Adrenal gland (tissue), 19 donors: ENCODE measurements at regions of chr1 and their contacts with region 1.

Region 1: GRCh38 chr1:17236779-17237560 is 11.9 kb upstream of the PADI3 start:
- DNase-seq: peak; percentile 86 to 97 (median 88)
- H3K4me3 ChIP-seq: no peak overlapping the region
- H3K27ac ChIP-seq: no peak overlapping the region
- H3K4me1 ChIP-seq: no peaks in the 10 kb centered on the region
- H3K27me3 ChIP-seq: no peaks in the 10 kb centered on the region
- CTCF ChIP-seq: peak; percentile 90 to 95 (median 94)
- POLR2A ChIP-seq: no peak

Region 2: DNA sequence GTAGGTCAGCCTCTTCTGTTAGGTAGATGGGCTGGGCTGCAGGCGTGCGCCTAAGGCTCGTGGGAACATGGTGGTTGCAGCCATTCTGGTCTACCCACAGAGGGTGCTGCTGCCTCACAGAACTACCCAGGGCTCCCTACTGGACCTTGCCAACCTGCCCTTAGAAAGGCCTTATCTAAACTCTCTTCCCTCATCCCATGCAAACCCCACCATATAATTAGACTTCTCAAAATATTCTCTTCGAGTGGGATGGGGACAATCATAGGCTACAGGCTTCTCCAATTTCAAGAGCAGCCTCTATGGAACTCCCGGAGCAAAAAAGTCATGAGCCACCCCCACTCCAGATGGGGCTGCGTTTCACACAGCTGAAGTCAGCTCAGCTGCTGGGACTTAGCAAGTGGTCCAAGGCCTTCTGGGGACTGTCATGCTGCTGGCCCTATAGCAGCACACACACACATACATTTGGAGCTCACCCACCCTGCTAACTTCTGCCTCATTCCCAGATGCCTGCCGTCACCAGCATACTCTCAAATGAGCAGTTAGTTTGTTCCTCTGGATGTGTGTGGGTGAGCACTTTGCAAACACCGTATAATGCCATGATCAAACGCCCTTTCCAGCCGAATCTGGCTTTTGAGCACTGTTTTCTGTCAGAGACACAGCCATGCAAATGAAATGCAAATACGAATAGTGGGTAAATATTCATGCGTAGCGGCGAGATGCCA is 177.1 kb before region 1 on chr1:
- intact Hi-C with region 1: loop called (anchors 2 kb)
- DNase-seq: peak; percentile 68 to 86 (median 78)
- H3K4me3 ChIP-seq: no peak overlapping the region
- H3K27ac ChIP-seq: no peak overlapping the region
- H3K4me1 ChIP-seq: peaks cover 0 to 6% of the 10 kb centered on the region in 2 donors
- H3K27me3 ChIP-seq: no peaks in the 10 kb centered on the region
- CTCF ChIP-seq: peak; percentile 50 to 89 (median 74)
- POLR2A ChIP-seq: no peak

Region 3: DNA sequence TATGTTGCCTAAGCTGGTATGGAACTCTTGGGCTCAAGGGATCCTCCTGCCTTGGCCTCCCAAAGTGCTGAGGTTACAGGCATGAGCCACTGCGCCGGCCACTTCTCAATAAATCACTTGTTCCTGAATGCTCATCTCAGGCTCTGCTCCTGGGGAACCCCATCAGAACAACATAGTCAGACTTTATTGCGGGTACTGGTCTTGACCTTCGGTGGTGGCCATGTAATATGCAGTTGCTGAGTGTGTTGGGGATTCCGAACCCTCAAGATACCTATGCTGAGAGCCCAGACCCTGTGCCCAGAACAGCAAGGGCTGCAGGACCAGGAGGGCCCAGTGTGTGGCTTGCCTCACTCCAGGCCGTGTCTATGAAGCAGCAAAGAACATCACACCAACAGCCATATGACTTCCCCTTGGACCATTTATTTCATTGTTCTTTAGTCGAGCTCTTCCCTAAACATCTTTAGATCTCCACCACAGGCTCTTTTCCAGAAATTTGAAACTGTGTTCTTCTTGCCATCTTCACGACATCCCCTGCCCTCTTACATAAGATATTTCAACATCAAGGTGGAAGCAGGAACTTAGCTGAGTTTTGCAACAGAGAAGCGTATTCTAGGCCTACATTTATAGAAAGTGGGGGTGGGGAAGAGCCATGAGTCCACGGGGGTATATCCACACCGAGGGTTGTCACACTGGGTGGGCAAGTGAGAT is 170.5 kb before region 1 on chr1:
- intact Hi-C with region 1: loop called in 1 of 2 experiments (anchors 2 kb)
- DNase-seq: no peak
- H3K4me3 ChIP-seq: no peak overlapping the region
- H3K27ac ChIP-seq: no peak overlapping the region
- H3K4me1 ChIP-seq: peaks cover 0 to 6% of the 10 kb centered on the region in 2 donors
- H3K27me3 ChIP-seq: no peaks in the 10 kb centered on the region
- CTCF ChIP-seq: no peak
- POLR2A ChIP-seq: no peak

Region 4: DNA sequence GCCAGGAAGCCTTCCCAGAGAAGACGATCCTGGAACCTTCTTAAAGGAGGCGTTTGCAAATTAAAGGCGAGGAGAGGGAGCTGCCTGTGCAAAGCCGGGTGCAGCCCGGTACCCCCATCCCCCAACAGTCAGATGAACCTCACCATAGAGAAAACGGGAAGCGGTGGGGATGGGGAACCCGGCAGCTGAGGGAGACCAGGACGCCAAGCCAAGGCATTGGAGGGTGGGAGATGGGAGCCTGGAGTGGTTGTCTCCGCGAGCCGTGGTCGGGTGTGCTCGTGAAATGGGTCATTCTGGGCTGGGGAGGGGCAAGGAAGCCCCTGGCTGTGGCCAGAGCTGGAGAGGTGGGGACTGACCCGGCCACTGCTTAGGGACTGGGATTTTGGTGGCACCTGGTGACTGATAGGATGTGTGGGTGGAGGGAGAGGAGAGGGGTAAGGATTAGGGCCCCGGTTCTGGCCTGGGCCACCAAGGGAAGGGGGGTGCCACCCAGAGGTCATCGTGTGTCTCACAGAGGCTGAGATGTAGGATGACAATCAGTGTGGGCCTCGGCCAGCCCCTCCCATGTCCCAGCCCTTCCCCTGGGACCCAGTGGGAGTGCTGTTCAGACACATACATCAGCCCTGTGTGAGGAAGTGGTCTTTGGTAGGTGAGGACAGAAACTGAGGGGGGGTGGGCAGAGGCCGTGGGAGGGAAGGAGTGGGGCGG is 117.0 kb before region 1 on chr1:
- intact Hi-C with region 1: loop called (anchors 2 to 5 kb)
- DNase-seq: peak in 2 of 7 donors; percentile 14 to 37
- H3K4me3 ChIP-seq: peak overlapping the region in 1 of 4 donors; percentile 46
- H3K27ac ChIP-seq: no peak overlapping the region
- H3K4me1 ChIP-seq: no peaks in the 10 kb centered on the region
- H3K27me3 ChIP-seq: peaks cover 17% of the 10 kb centered on the region
- CTCF ChIP-seq: no peak
- POLR2A ChIP-seq: no peak

Region 5: DNA sequence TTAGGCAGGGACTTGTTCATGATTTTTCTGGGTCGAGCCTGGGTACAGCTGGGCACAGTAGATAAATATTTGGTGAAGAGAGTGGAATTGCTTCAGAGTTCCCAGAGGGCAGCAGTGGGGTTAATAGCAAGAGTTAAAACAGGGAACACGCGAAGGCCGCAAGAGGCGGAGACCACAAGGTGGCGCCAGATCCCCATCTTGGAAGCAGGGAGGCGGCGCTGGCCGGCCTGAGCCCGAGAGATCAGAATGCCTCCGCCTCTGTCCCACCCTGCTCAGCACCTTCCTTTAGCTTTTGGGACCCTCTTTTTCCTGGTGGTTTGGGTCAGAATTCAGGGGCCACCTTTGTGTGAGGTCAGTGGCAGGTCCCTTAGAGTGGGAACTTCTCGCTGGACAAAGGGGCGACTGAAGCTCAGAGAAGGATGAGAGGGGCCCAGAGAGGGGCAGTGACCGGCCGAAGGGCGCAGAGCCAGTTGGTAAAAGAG is 111.2 kb before region 1 on chr1:
- intact Hi-C with region 1: loop called (anchors 2 to 5 kb)
- DNase-seq: peak; percentile 77 to 95 (median 91)
- H3K4me3 ChIP-seq: no peak overlapping the region
- H3K27ac ChIP-seq: no peak overlapping the region
- H3K4me1 ChIP-seq: peaks cover 3 to 21% of the 10 kb centered on the region in 2 donors
- H3K27me3 ChIP-seq: no peaks in the 10 kb centered on the region
- CTCF ChIP-seq: peak; percentile 90 to 98 (median 95)
- POLR2A ChIP-seq: no peak

Region 6: DNA sequence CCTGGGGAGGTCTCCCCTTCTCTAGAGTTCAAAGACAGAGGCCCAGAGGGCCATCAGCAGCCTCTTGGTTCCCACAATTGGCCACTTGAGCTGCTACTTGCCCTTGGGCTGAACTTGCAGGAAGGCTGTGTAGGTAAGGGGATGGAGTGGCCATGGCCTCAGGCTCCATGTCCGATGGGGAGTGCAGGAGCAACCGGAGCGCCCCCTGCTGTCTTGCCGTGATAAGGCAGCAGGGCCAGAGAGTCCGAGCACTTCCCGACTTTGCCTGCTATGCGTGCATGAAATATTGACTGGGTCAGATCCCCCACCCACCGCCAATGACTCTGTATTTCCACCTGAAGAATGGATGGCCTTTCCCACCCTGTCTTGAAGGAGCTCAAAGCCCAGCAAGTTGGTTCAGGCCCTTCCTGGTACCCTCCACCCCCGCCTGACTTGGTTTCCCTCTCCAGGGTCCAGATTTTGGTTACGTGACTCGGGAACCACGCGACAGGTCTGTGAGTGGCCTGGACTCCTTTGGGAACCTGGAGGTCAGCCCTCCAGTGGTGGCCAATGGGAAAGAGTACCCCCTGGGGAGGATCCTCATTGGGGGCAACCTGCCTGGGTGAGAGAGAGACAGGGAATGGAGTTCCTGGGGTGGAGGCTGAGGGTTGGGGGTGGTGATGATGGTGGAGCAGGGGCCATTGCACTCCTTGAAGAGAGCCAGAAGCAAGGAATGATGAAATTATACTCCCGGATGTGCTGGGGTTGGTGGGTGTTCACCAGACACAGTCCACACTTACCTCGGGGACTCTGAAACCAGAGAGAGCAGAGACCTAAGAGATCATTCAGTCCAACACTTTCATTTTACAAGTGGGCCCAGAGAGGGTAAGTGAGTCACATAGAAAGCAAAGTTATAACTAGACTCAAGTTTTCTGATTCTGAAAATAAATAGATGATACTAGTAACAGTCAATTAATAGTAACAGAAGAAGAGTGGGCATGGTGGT is 37.5 kb after region 1 on chr1:
- intact Hi-C with region 1: no loop called
- DNase-seq: peak in 6 of 7 donors; percentile 34 to 73 (median 57)
- H3K4me3 ChIP-seq: no peak overlapping the region
- H3K27ac ChIP-seq: no peak overlapping the region
- H3K4me1 ChIP-seq: no peaks in the 10 kb centered on the region
- H3K27me3 ChIP-seq: no peaks in the 10 kb centered on the region
- CTCF ChIP-seq: peak; percentile 31 to 63 (median 48)
- POLR2A ChIP-seq: no peak

Region 7: DNA sequence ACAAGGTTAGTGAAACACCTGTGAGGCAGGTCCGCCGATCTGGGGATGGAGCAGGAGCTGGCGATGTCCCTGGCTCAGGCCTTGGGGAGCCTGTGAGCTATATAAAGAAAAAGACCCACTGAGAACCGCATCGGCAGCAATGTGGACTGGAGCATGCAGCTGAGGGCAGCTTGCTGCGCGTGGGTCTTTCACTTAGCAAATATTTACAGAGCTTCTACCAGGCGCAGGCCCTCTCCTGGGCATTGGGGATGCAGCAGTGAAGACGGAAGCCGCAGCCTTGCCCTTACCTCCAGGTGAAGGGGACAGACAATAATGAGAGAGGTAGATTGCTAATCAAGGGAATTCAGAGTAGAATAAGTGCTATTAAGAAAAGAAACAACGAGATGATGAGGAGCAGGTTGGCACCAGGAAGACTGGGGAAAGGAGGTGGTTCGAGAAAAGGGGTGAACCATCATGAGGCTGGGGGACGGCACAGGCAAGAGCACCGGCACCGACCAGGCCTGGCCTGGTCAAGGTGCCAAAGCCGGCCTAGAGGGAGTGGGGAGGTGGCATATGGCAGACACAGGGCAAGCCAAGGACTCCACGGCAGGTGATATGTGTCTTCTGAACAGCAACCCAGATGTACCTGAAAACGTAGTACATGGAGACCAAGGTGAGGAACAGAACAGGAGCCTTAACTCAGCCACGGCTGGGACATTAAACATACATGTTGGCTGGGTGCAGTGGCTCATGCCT is 1333.0 kb after region 1 on chr1:
- intact Hi-C with region 1: no loop called
- DNase-seq: no peak
- H3K4me3 ChIP-seq: no peak overlapping the region
- H3K27ac ChIP-seq: no peak overlapping the region
- H3K4me1 ChIP-seq: no peaks in the 10 kb centered on the region
- H3K27me3 ChIP-seq: peaks cover 5% of the 10 kb centered on the region
- CTCF ChIP-seq: no peak
- POLR2A ChIP-seq: no peak